ENCODE measurements at regions of chr6 and their contacts with region 1.

Region 1: DNA sequence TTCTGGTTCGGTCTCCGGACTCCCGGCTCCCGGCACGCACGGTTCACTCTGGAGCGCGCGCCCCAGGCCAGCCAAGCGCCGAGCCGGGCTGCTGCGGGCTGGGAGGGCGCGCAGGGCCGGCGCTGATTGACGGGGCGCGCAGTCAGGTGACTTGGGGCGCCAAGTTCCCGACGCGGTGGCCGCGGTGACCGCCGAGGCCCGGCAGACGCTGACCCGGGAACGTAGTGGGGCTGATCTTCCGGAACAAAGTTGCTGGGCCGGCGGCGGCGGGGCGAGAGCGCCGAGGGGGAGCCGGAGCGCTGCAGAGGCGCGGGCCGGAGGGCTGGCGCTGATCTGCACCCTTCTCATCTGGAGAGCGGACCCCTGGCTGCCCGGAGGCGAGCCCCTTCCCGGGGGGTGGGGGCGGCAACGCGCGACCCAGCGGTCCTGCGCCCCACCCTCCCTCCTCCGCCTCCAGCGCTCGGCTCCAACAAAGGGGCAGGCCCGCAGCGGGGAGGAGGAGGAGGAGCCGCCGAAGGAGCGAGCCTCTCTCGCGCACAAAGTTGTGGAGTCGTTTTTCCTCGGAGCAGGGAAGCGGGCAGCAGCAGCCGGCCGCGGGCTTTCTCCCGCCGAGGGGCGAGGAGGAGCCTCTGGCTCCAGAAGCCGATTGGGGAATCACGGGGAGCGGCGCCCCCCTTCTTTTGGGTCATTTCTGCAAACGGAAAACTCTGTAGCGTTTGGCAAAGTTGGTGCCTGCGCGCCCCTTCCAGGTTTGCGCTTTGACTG is at the start of gene UTRN:
- DNase-seq: peak; percentile 7 to 62 (median 30)
- ATAC-seq: peak; percentile 66
- H3K4me3 ChIP-seq: peak within 1 kb of the TSS; percentile 85
- H3K4me3 Mint-ChIP-seq: peak within 1 kb of the TSS; percentile 76 to 96 (median 92)
- H3K27ac ChIP-seq: no peak within 1 kb of the TSS
- H3K27ac Mint-ChIP-seq: peak within 1 kb of the TSS in 7 of 9 donors; percentile 22 to 82 (median 60)
- H3K4me1 ChIP-seq: peaks cover 10 to 14% of the 10 kb centered on the region in 2 donors
- H3K4me1 Mint-ChIP-seq: peaks cover 12 to 25% (median 15%) of the 10 kb centered on the region in 7 donors
- H3K27me3 ChIP-seq: no peaks in the 10 kb centered on the region
- H3K27me3 Mint-ChIP-seq: peaks cover 6 to 47% (median 18%) of the 10 kb centered on the region in 5 donors
- total RNA-seq, gene UTRN: 148 to 280 (median 153) TPM

Region 2: GRCh38 chr6:144305985-144306384 is 21.0 kb after region 1 on chr6:
- CTCF ChIA-PET with region 1: no interaction called
- POLR2A ChIA-PET with region 1: no interaction called
- intact Hi-C with region 1: loop called in 1 of 2 experiments (anchors 2 kb)
- DNase-seq: peak in 1 of 9 donors; percentile 27
- ATAC-seq: peak; percentile 71
- H3K4me3 ChIP-seq: peak overlapping the region; percentile 23
- H3K4me3 Mint-ChIP-seq: peak overlapping the region in 2 of 10 donors; percentile 67 to 71
- H3K27ac ChIP-seq: no peak overlapping the region
- H3K27ac Mint-ChIP-seq: peak overlapping the region in 2 of 9 donors; percentile 33 to 87
- H3K4me1 ChIP-seq: peaks cover 0 to 44% of the 10 kb centered on the region in 2 donors
- H3K4me1 Mint-ChIP-seq: peaks cover 0 to 48% (median 5%) of the 10 kb centered on the region in 7 donors
- H3K27me3 ChIP-seq: no peaks in the 10 kb centered on the region
- H3K27me3 Mint-ChIP-seq: peaks cover 0 to 12% (median 0%) of the 10 kb centered on the region in 5 donors

Region 3: DNA sequence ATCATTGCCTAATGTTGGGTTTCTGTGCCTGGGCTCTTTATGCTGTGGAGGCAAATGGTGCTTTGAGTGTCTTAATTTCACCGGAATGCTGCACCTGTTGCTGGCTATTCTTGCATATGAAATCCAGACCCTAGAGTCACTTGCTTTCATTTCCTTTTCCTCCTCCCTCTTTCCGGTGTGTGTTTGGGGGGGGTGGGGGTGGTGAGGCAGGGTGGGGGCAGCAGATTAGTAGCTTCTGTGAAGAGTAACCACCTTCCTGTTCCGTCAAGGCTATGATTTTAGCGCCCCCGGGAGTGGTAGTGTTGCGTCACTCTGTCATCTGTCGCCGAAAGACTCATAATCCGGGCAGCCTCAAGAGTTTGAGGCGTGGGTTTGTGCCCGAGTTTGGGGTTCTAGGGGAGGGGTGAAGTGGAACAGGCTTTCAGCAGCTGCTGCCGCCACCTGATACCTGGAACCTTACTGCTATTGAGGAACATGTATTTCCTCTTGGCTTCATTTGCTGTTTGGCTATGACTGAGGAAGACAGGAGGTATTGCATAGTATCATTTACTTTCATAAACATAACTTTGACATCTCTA is 49.3 kb after region 1 on chr6:
- CTCF ChIA-PET with region 1: no interaction called
- POLR2A ChIA-PET with region 1: no interaction called
- intact Hi-C with region 1: loop called in 1 of 2 experiments (anchors 2 kb)
- DNase-seq: peak; percentile 24 to 87 (median 83)
- ATAC-seq: peak; percentile 91
- H3K4me3 ChIP-seq: peak overlapping the region; percentile 59
- H3K4me3 Mint-ChIP-seq: peak overlapping the region; percentile 80 to 93 (median 86)
- H3K27ac ChIP-seq: peak overlapping the region; percentile 75
- H3K27ac Mint-ChIP-seq: peak overlapping the region; percentile 87 to 98 (median 96)
- H3K4me1 ChIP-seq: peaks cover 34 to 41% of the 10 kb centered on the region in 2 donors
- H3K4me1 Mint-ChIP-seq: peaks cover 40 to 74% (median 59%) of the 10 kb centered on the region in 7 donors
- H3K27me3 ChIP-seq: no peaks in the 10 kb centered on the region
- H3K27me3 Mint-ChIP-seq: no peaks in the 10 kb centered on the region

Region 4: GRCh38 chr6:144411332-144412190 is 126.6 kb after region 1 on chr6:
- CTCF ChIA-PET with region 1: no interaction called
- POLR2A ChIA-PET with region 1: no interaction called
- intact Hi-C with region 1: loop called in 1 of 2 experiments (anchors 1 kb)
- DNase-seq: peak in 3 of 9 donors; percentile 6 to 20 (median 7)
- ATAC-seq: no peak
- H3K4me3 ChIP-seq: no peak overlapping the region
- H3K4me3 Mint-ChIP-seq: peak overlapping the region; percentile 39 to 87 (median 69)
- H3K27ac ChIP-seq: no peak overlapping the region
- H3K27ac Mint-ChIP-seq: peak overlapping the region; percentile 11 to 87 (median 68)
- H3K4me1 ChIP-seq: peaks cover 14 to 22% of the 10 kb centered on the region in 2 donors
- H3K4me1 Mint-ChIP-seq: peaks cover 34 to 86% (median 66%) of the 10 kb centered on the region in 7 donors
- H3K27me3 ChIP-seq: no peaks in the 10 kb centered on the region
- H3K27me3 Mint-ChIP-seq: no peaks in the 10 kb centered on the region

Region 5: GRCh38 chr6:144460327-144461095 is 175.5 kb after region 1 on chr6:
- CTCF ChIA-PET with region 1: no interaction called
- POLR2A ChIA-PET with region 1: no interaction called
- intact Hi-C with region 1: loop called in 1 of 2 experiments (anchors 5 kb)
- DNase-seq: peak in 5 of 9 donors; percentile 15 to 39 (median 26)
- ATAC-seq: peak; percentile 74
- H3K4me3 ChIP-seq: no peak overlapping the region
- H3K4me3 Mint-ChIP-seq: peak overlapping the region in 9 of 10 donors; percentile 12 to 81 (median 69)
- H3K27ac ChIP-seq: peak overlapping the region; percentile 12
- H3K27ac Mint-ChIP-seq: peak overlapping the region; percentile 45 to 91 (median 87)
- H3K4me1 ChIP-seq: peaks cover 12 to 13% of the 10 kb centered on the region in 2 donors
- H3K4me1 Mint-ChIP-seq: peaks cover 8 to 37% (median 28%) of the 10 kb centered on the region in 7 donors
- H3K27me3 ChIP-seq: no peaks in the 10 kb centered on the region
- H3K27me3 Mint-ChIP-seq: no peaks in the 10 kb centered on the region

Region 6: GRCh38 chr6:144482142-144482541 is 197.2 kb after region 1 on chr6:
- CTCF ChIA-PET with region 1: interaction called, 4 read pairs
- POLR2A ChIA-PET with region 1: no interaction called
- intact Hi-C with region 1: loop called (anchors 1 to 2 kb)
- DNase-seq: peak; percentile 27 to 67 (median 61)
- ATAC-seq: peak; percentile 77
- H3K4me3 ChIP-seq: no peak overlapping the region
- H3K4me3 Mint-ChIP-seq: no peak overlapping the region
- H3K27ac ChIP-seq: no peak overlapping the region
- H3K27ac Mint-ChIP-seq: peak overlapping the region in 6 of 9 donors; percentile 12 to 88 (median 38)
- H3K4me1 ChIP-seq: no peaks in the 10 kb centered on the region
- H3K4me1 Mint-ChIP-seq: peaks cover 0 to 20% (median 4%) of the 10 kb centered on the region in 7 donors
- H3K27me3 ChIP-seq: no peaks in the 10 kb centered on the region
- H3K27me3 Mint-ChIP-seq: no peaks in the 10 kb centered on the region

Region 7: DNA sequence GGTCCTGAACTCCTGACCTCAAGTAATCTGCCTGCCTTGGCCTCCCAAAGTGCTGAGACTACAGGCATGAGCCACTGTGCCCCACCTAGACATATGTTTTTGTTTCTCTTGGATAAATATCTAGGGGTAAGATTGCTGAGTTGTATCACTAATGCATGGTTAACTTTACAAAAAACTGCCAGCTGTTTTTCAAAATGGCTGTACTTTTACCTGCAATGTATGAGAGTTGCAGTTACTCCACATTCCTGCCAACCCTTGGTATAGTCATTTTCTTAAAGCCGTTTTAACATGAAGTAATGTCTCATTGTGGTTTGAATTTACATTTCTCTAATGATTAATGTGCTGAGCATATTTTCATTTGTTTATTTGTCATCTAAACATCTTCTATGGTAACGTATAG is 289.8 kb after region 1 on chr6:
- CTCF ChIA-PET with region 1: no interaction called
- POLR2A ChIA-PET with region 1: no interaction called
- intact Hi-C with region 1: no loop called
- DNase-seq: no peak
- ATAC-seq: no peak
- H3K4me3 ChIP-seq: no peak overlapping the region
- H3K4me3 Mint-ChIP-seq: no peak overlapping the region
- H3K27ac ChIP-seq: no peak overlapping the region
- H3K27ac Mint-ChIP-seq: peak overlapping the region in 3 of 9 donors; percentile 36 to 63 (median 46)
- H3K4me1 ChIP-seq: no peaks in the 10 kb centered on the region
- H3K4me1 Mint-ChIP-seq: peaks cover 0 to 24% (median 5%) of the 10 kb centered on the region in 7 donors
- H3K27me3 ChIP-seq: no peaks in the 10 kb centered on the region
- H3K27me3 Mint-ChIP-seq: no peaks in the 10 kb centered on the region